AG04450 (cell line): ENCODE measurements at regions of chr13 and their contacts with region 1.

Region 1: GRCh38 chr13:106536244-106537034 is 977 bp upstream of the EFNB2 start:
- DNase-seq: peak; percentile 72
- H3K4me3 ChIP-seq: peak overlapping the region; percentile 71
- H3K27ac ChIP-seq: no peak overlapping the region
- H3K27me3 ChIP-seq: no peaks in the 10 kb centered on the region
- CTCF ChIP-seq: peak; percentile 97

Region 2: GRCh38 chr13:104773775-104774174 is 1762.7 kb before region 1 on chr13:
- CTCF ChIA-PET with region 1: interaction called, 23 read pairs
- POLR2A ChIA-PET with region 1: no interaction called
- DNase-seq: peak; percentile 21
- H3K4me3 ChIP-seq: no peak overlapping the region
- H3K27ac ChIP-seq: no peak overlapping the region
- H3K27me3 ChIP-seq: no peaks in the 10 kb centered on the region
- CTCF ChIP-seq: peak; percentile 78

Region 3: DNA sequence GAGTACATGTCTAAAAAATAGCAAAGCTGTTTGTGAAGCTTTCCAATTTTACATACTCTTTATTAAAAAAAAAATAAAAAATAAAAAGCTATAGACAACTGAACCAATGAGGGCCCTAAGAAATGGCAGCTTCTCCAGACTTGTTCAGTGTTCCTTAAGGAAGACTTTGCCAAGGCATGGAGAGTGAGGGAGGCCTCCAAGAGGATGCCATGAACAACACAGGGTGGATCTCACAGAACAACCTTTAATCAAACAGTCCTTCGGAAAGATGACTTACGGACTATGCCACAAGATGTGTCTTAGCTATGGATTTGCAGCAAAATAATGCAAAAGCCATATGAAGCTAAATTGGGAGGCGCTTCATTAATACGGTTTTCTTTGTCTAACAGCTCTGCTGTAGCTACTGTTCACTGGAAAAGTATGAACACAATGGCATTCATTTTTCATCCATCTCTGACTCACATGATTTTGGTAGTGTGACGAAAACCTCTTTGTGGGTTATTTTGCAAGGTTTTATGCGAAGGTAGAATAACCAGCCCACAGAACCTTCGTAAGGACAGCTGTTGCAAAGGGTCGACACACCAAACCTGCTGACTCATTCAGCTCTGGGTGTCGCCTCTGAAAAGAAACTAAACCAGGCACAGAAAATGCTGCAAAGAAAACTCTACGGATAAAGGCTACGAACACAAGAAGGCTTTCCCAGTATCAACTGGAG is 28.7 kb before region 1 on chr13:
- CTCF ChIA-PET with region 1: no interaction called
- POLR2A ChIA-PET with region 1: no interaction called
- DNase-seq: peak; percentile 76
- H3K4me3 ChIP-seq: peak overlapping the region; percentile 1; the same call in 1 of the 2 replicates
- H3K27ac ChIP-seq: peak overlapping the region; percentile 60
- H3K27me3 ChIP-seq: no peaks in the 10 kb centered on the region
- CTCF ChIP-seq: no peak

Region 4: GRCh38 chr13:106561551-106562170 is 25.2 kb after region 1 on chr13:
- CTCF ChIA-PET with region 1: interaction called, 12 read pairs
- POLR2A ChIA-PET with region 1: interaction called, 6 read pairs
- DNase-seq: no peak
- H3K4me3 ChIP-seq: no peak overlapping the region
- H3K27ac ChIP-seq: peak overlapping the region; percentile 13
- H3K27me3 ChIP-seq: no peaks in the 10 kb centered on the region
- CTCF ChIP-seq: no peak

Region 5: DNA sequence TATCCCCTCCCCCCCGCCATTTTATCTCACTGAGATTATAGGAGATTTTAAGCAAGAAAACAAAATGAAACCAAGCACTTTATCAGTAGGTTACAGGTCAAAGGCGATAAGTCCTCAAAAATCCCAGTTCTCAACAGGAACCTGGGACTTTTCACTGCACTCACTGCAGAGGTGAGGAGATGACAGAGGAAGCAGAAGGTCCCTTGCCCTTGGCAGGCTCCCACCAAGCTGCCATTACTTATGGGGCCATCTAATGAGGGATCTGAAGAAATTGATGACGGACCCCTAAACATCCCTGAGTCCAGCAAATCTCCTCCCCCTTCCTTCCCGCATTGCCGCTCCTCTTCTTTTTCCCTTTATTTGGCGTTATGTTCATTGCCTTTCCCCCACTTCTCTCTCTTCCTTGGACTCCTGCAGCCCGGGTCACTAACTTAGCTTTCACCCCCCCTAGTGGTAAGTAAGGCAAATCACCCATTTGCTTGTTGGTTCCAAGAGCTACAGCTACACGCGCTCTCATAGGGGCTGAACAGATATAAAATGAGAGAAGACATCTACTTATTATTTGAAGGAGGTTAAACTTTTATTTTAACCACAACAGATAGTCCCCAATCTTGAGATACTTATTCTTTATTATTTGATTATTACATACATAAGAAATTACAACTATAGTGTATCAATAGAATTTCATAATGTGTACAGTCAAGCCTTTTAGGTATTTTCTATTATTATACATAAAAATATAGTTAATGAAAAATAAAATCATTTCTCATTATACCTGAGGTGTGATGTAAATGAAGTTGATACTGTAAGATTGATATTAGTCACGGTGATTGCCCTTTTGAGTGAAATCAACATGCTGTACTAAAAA is 83.5 kb after region 1 on chr13:
- CTCF ChIA-PET with region 1: interaction called, 25 read pairs
- POLR2A ChIA-PET with region 1: no interaction called
- DNase-seq: peak; percentile 32
- H3K4me3 ChIP-seq: no peak overlapping the region
- H3K27ac ChIP-seq: no peak overlapping the region
- H3K27me3 ChIP-seq: peaks cover 29% of the 10 kb centered on the region
- CTCF ChIP-seq: peak; percentile 94